ENCODE measurements at regions of chr16 and their contacts with region 1.

Region 1: GRCh38 chr16:57300387-57301125 is 16.1 kb upstream of the PLLP start:
- DNase-seq: peak; percentile 99
- ATAC-seq: peak; percentile 96
- H3K4me3 ChIP-seq: peak overlapping the region; percentile 52
- H3K27ac ChIP-seq: peak overlapping the region; percentile 86
- H3K4me1 ChIP-seq: peaks cover 29% of the 10 kb centered on the region
- H3K27me3 ChIP-seq: no peaks in the 10 kb centered on the region
- CTCF ChIP-seq: peak; percentile 93

Region 2: GRCh38 chr16:57141822-57142631 is 158.5 kb before region 1 on chr16:
- intact Hi-C with region 1: no loop called
- DNase-seq: peak; percentile 64
- ATAC-seq: peak; percentile 26
- H3K4me3 ChIP-seq: no peak overlapping the region
- H3K27ac ChIP-seq: peak overlapping the region; percentile 42
- H3K4me1 ChIP-seq: peaks cover 52% of the 10 kb centered on the region
- H3K27me3 ChIP-seq: no peaks in the 10 kb centered on the region
- CTCF ChIP-seq: no peak

Region 3: DNA sequence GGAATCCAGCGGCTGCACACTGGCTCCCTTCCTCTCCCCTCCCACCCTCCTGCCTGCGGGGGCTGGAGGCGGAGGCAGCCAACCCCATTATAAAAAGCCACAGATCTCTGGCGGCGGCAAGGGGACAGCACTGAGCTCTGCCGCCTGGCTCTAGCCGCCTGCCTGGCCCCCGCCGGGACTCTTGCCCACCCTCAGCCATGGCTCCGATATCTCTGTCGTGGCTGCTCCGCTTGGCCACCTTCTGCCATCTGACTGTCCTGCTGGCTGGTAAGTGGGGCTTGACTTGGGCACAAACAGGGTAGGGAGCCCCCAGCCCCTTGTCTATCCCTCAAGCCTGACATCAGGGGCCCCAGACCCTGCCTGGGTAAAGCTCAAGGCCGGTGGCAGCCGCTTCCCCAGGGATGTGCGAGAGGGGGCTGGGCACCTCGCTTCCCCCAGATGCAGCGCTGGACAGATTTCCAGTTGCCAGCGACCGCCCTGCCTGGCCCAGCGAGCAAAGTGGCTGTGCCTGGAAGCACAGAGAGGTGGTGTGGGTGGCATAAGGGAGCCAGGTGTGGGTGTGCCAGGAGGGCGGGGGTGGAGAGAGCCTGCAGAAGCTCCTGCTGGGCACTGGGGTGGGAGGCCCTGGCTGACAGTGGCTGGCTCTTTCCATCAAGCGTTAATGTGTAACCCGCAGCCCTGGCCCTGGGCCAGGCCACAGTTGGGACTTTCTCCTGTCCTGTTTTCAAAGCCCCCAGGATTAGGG is 72.0 kb after region 1 on chr16 and contains the start of gene CX3CL1:
- intact Hi-C with region 1: loop called (anchors 5 kb)
- DNase-seq: peak; percentile 70
- ATAC-seq: peak; percentile 74
- H3K4me3 ChIP-seq: peak within 1 kb of the TSS; percentile 47
- H3K27ac ChIP-seq: peak within 1 kb of the TSS; percentile 67
- H3K4me1 ChIP-seq: peaks cover under 1% of the 10 kb centered on the region
- H3K27me3 ChIP-seq: no peaks in the 10 kb centered on the region
- CTCF ChIP-seq: peak; percentile 30
- total RNA-seq, gene CX3CL1: 47.5 TPM

Region 4: DNA sequence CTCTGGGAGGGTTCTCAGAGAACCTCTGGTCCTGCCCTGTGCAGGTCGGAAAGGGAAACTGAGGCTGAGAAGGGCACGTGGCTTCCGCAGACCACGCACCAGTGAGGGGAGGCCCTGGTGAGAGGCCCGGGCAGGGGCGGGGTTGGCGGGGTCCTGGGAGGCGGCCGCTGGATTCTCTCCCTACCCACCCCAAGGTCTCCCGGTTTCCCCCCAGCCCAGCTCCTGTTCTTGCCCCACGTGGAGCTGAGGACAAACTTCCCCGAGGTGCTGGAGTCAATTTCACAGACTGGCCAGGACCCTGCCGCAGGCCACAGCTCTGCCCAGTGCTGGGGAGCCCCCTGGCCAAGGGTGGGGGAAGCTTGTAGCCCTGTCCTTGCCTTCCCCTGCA is 115.6 kb after region 1 on chr16:
- intact Hi-C with region 1: loop called (anchors 2 kb)
- DNase-seq: no peak
- ATAC-seq: no peak
- H3K4me3 ChIP-seq: no peak overlapping the region
- H3K27ac ChIP-seq: no peak overlapping the region
- H3K4me1 ChIP-seq: peaks cover 23% of the 10 kb centered on the region
- H3K27me3 ChIP-seq: no peaks in the 10 kb centered on the region
- CTCF ChIP-seq: no peak